CD14-positive monocyte (primary cell): ENCODE measurements at regions of chr10 and their contacts with region 1.

Region 1: GRCh38 chr10:97714048-97714371 is 480 bp downstream of the MARVELD1 start:
- DNase-seq: peak; percentile 78 to 90 (median 86)
- H3K4me3 ChIP-seq: peak overlapping the region; percentile 40 to 70 (median 43)
- H3K4me3 Mint-ChIP-seq: peak overlapping the region; percentile 80 to 92
- H3K27ac ChIP-seq: peak overlapping the region; percentile 68 to 89
- H3K27ac Mint-ChIP-seq: peak overlapping the region; percentile 85 to 94 (median 92)
- H3K4me1 ChIP-seq: peaks cover 60 to 71% of the 10 kb centered on the region in 2 donors
- H3K4me1 Mint-ChIP-seq: peaks cover 62% of the 10 kb centered on the region
- H3K27me3 ChIP-seq: no peaks in the 10 kb centered on the region
- H3K27me3 Mint-ChIP-seq: peaks cover 0 to 5% (median 2%) of the 10 kb centered on the region in 3 donors
- CTCF ChIP-seq: no peak

Region 2: GRCh38 chr10:97731346-97732051 is 17.5 kb after region 1 on chr10:
- intact Hi-C with region 1: loop called (anchors 1 to 2 kb)
- DNase-seq: peak; percentile 59 to 74 (median 71)
- H3K4me3 ChIP-seq: no peak overlapping the region
- H3K4me3 Mint-ChIP-seq: no peak overlapping the region
- H3K27ac ChIP-seq: no peak overlapping the region
- H3K27ac Mint-ChIP-seq: no peak overlapping the region
- H3K4me1 ChIP-seq: peaks cover 8 to 9% of the 10 kb centered on the region in 2 donors
- H3K4me1 Mint-ChIP-seq: peaks cover 13% of the 10 kb centered on the region
- H3K27me3 ChIP-seq: no peaks in the 10 kb centered on the region
- H3K27me3 Mint-ChIP-seq: peaks cover 0 to 3% (median 2%) of the 10 kb centered on the region in 3 donors
- CTCF ChIP-seq: peak; percentile 89